H1 (cell line): ENCODE measurements at regions of chr9 and their contacts with region 1.

Region 1: GRCh38 chr9:129737479-129738274 is 15.2 kb downstream of the PTGES start:
- DNase-seq: peak in 1 of 2 experiments; percentile 97
- H3K4me3 ChIP-seq: peak overlapping the region; percentile 38 to 77 (median 46)
- H3K27ac ChIP-seq: no peak overlapping the region
- H3K4me1 ChIP-seq: peaks cover 0 to 4% (median 1%) of the 10 kb centered on the region in 4 experiments; a peak in 5 of 7 replicates
- H3K27me3 ChIP-seq: no peaks in the 10 kb centered on the region; a peak in 2 of 7 replicates
- CTCF ChIP-seq: peak; percentile 83 to 89 (median 88)
- EP300 ChIP-seq: no peak
- POLR2A ChIP-seq: no peak
- RAD21 ChIP-seq: peak; percentile 76 to 80

Region 2: GRCh38 chr9:129712634-129713401 is 24.9 kb before region 1 on chr9:
- CTCF ChIA-PET with region 1: interaction called, 11 read pairs
- POLR2A ChIA-PET with region 1: no interaction called
- DNase-seq: no peak
- H3K4me3 ChIP-seq: no peak overlapping the region
- H3K27ac ChIP-seq: no peak overlapping the region
- H3K4me1 ChIP-seq: peaks cover 0 to 13% (median 0%) of the 10 kb centered on the region in 4 experiments; a peak in 2 of 7 replicates
- H3K27me3 ChIP-seq: no peaks in the 10 kb centered on the region; a peak in 1 of 7 replicates
- CTCF ChIP-seq: no peak
- EP300 ChIP-seq: no peak
- POLR2A ChIP-seq: no peak
- RAD21 ChIP-seq: no peak

Region 3: DNA sequence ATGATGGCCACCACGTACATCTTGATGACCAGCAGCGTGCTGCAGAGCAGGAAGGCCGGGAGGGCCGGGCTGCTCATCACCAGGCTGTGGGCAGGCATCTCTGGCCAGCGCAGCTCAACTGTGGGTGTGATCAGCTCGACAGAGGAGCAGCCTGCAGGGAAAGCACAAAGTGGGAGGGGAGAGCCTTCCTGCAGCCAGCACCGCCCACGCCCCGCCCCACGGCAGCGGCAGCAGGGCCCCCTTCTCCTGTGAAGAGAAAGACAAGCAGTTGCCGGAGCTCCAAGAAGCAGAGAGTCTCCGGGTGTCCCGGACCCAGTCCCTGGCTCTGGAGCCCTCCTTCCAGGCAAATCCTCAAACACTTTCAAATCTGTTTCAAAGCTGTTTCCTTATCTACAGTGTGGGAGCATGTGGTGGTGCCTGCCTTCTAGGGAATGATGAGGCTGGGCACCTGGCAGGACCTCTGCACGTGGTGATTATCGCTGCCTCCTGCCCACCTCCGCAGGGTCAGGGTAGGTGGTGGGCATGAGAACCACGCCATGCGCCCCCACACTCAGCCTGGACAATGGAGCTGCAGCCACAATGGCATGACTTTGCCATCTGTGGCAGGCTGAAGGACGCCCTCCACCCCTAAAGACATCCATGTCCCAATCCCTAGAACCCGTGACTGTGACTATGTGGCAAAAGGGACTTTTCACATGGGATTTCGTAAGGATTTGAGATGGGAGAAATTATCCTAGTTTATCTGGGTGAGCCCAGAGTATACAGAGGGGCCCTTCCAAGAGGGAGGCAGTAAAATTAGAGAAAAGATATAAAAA is 15.4 kb after region 1 on chr9 and contains the start of gene PTGES:
- CTCF ChIA-PET with region 1: interaction called, 168 read pairs
- POLR2A ChIA-PET with region 1: interaction called, 4 read pairs
- DNase-seq: peak in 1 of 2 experiments; percentile 78
- H3K4me3 ChIP-seq: peak within 1 kb of the TSS in 2 of 4 experiments; percentile 15 to 23; a peak in 3 of 8 replicates
- H3K27ac ChIP-seq: no peak within 1 kb of the TSS
- H3K4me1 ChIP-seq: peaks cover 0 to 12% (median 11%) of the 10 kb centered on the region in 4 experiments; a peak in 5 of 7 replicates
- H3K27me3 ChIP-seq: no peaks in the 10 kb centered on the region; a peak in 1 of 7 replicates
- CTCF ChIP-seq: no peak
- EP300 ChIP-seq: no peak
- POLR2A ChIP-seq: no peak
- RAD21 ChIP-seq: no peak
- total RNA-seq, gene PTGES: 3.2 TPM in 2 replicates

Region 4: DNA sequence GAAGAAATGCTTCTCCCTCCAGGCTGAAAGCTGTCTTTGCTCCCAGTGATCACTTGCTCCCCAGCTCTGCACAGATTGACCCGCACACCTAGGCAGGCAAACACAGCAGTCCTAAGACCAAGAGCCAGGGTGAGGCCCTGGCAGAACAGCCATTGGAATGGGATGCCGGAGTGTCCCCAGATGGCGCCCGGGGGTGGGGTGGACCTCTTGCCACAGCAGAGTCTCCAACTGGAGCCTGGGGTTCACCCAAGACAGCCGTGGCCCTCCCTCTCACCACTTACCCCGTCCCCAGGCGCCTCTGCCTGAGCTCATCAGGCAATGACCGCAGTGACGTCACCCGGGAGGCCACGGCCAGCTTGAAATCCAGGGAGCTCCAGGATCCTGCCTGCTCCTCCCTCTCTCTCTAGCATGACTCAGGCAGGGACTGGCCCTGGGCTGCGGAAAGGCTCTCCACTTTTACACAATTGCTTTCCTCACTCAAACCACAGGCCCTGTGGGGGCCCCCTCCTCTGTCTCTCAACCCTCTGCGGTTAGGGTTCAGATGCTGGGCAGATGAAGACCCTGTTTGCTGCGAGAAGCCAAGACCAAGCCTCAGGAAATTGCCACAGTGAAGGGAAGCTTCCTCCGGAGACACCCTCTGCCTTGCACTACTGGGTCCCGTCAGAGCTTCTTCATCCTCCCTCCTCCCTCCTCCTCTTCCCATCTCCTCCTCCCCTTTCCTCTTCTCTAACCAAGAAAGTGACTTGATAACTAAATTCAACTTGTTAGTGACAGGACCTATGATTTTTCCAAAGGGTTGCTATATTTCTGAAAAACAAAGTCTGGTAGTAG is 39.5 kb after region 1 on chr9:
- CTCF ChIA-PET with region 1: interaction called, 250 read pairs
- POLR2A ChIA-PET with region 1: interaction called, 3 read pairs
- DNase-seq: no peak
- H3K4me3 ChIP-seq: no peak overlapping the region
- H3K27ac ChIP-seq: no peak overlapping the region
- H3K4me1 ChIP-seq: peaks cover 0 to 3% (median 0%) of the 10 kb centered on the region in 4 experiments; a peak in 3 of 7 replicates
- H3K27me3 ChIP-seq: no peaks in the 10 kb centered on the region
- CTCF ChIP-seq: no peak
- EP300 ChIP-seq: no peak
- POLR2A ChIP-seq: no peak
- RAD21 ChIP-seq: no peak

Region 5: DNA sequence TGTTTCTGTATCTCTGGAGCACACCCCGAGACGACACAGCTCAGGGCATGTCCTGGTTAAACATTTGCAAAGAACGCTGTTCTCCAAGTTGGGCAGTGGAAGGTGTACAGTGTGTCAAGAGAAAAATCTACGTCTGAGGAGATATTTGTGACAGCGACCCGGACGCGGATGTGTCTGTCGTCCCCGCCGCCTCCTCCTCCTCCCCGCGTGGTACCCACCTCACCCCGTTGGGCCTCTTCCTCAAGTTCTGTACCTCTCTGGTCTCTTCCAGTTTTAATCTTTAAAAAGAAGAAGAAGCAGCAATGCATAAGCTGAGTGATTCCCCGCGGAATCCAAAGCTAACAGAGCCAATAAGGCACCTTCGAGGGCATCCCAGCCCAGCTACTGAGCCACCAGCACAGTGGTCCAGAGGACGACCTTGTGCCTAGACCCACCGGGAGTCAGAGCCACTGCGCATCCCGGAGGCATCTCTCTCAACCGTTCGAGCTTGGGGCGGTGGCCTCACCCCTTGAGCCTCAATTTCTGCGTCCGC is 96.9 kb after region 1 on chr9:
- CTCF ChIA-PET with region 1: no interaction called
- POLR2A ChIA-PET with region 1: no interaction called
- DNase-seq: no peak
- H3K4me3 ChIP-seq: peak overlapping the region; percentile 80 to 100 (median 99)
- H3K27ac ChIP-seq: no peak overlapping the region
- H3K4me1 ChIP-seq: peaks cover 5 to 11% (median 7%) of the 10 kb centered on the region in 4 experiments; a peak in 6 of 7 replicates
- H3K27me3 ChIP-seq: no peaks in the 10 kb centered on the region; a peak in 1 of 7 replicates
- CTCF ChIP-seq: no peak
- EP300 ChIP-seq: no peak
- POLR2A ChIP-seq: peak in 1 of 2 experiments; percentile 1; a peak in 1 of 3 replicates
- RAD21 ChIP-seq: no peak